ENCODE measurements at regions of chr7 and their contacts with region 1.

Region 1: DNA sequence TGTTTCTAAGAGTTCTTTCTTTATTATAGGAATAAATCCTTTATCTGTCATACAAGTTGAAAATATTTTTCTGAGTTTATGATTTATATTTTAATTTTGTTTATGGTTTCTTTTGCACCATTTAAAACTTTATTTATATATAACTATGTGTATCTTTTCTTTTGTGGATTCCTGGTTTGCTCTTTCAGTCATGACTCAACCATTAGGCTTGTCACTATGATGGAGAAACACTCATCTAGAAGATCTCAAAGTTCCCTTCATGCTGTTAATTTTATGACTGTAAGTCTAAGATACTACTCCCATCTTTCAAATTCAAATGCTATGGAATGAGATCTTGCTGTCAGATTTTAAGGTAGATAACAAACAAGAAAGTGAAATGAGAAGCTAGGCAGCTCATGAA is 199.5 kb downstream of the INHBA start:
- DNase-seq: no peak

Region 2: GRCh38 chr7:41870461-41871138 is 367.2 kb after region 1 on chr7:
- intact Hi-C with region 1: loop called (anchors 10 kb)
- DNase-seq: no peak